Activated CD8-positive, alpha-beta T cell treated with anti-CD3 and anti-CD28 coated beads for 36 hours (primary cell): ENCODE measurements at regions of chr6 and their contacts with region 1.

Region 1: DNA sequence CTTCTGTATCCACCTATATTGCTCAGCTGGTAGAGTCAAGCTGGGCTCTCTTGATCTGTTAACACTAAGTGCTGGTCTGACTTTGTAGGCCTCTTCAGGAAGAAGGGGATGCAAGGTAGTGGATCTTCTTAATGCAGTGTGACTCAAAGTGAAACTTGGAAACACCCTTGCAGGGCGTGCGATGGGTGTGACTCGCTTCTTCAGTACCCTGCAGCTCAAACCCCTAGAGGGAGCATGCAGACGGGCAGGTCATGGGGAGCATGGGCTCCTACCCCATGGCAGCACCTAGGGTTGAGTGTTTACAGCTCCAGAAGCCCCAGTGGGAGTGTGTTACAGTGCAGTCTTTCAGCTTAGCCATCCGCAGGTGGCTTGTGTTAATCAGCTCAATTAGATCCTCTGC is 757 bp upstream of the SAMD3 start:
- DNase-seq: peak; percentile 89
- ATAC-seq: peak; percentile 97
- H3K4me3 Mint-ChIP-seq: peak overlapping the region; percentile 35
- H3K27ac Mint-ChIP-seq: peak overlapping the region; percentile 67
- H3K4me1 Mint-ChIP-seq: peaks cover 33% of the 10 kb centered on the region
- H3K27me3 Mint-ChIP-seq: no peaks in the 10 kb centered on the region
- CTCF ChIP-seq: peak; percentile 44

Region 2: GRCh38 chr6:130132286-130132701 is 91.2 kb before region 1 on chr6:
- CTCF ChIA-PET with region 1: interaction called, 5 read pairs
- POLR2A ChIA-PET with region 1: no interaction called
- intact Hi-C with region 1: loop called (anchors 5 kb)
- DNase-seq: peak; percentile 80
- ATAC-seq: peak; percentile 90
- H3K4me3 Mint-ChIP-seq: peak overlapping the region; percentile 66
- H3K27ac Mint-ChIP-seq: peak overlapping the region; percentile 91
- H3K4me1 Mint-ChIP-seq: peaks cover 76% of the 10 kb centered on the region
- H3K27me3 Mint-ChIP-seq: no peaks in the 10 kb centered on the region
- CTCF ChIP-seq: no peak

Region 3: GRCh38 chr6:130692659-130693058 is 469.2 kb after region 1 on chr6:
- CTCF ChIA-PET with region 1: no interaction called
- POLR2A ChIA-PET with region 1: no interaction called
- intact Hi-C with region 1: no loop called
- DNase-seq: no peak
- ATAC-seq: no peak
- H3K4me3 Mint-ChIP-seq: no peak overlapping the region
- H3K27ac Mint-ChIP-seq: no peak overlapping the region
- H3K4me1 Mint-ChIP-seq: peaks cover 18% of the 10 kb centered on the region
- H3K27me3 Mint-ChIP-seq: no peaks in the 10 kb centered on the region
- CTCF ChIP-seq: no peak